ENCODE measurements at regions of chr9 and their contacts with region 1.

Region 1: DNA sequence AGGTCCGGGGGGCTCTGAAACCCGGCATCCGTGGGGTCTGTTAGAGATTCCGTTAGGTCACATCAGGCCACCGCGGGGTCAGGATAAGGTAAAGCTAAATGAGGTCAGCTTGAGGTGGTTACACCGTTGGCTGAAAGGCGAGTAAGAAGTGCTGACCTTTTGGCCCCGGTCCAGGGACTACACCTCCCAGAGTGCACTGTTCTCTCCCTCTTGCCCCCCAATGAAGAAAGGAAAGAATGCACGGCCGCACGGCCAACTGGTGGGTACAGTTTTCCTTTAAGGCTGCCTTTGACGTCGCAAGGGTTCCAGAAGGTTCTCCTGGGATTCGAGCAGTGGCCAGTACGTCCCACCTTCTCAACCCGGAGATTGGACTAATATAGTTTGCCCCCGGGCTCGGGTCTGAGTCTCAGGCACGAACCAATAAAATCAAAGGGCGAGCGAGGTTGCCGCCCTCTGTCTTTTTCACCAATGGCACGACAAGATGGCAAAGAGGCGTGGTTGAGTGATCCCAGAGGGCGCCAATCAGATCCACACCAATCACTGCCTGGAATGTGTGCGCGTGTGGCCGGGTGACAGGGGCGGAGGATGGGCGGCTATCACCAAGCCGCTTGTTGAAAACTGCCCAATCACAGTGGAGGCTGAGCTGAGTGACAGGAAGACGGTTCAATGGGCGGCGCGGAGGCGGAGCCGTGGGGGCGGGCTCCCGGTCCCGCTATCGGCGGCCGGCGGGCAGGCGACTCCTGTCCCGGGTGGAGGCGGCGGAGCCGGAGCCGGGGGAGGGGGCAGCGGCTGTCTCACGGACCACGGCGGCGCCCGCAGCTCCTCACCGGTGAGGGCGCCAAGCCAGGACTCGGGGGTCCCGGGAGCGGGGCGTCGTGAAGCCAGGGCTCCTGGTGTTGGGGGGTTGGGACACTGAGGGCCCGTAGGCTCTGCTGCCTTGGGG is at the start of gene DNAJB5:
- DNase-seq: peak; percentile 99
- ATAC-seq: peak; percentile 86 to 95
- H3K4me3 ChIP-seq: peak within 1 kb of the TSS; percentile 60
- H3K27ac ChIP-seq: peak within 1 kb of the TSS; percentile 56 to 83
- H3K4me1 ChIP-seq: peaks cover 37% of the 10 kb centered on the region
- CTCF ChIP-seq: no peak
- EP300 ChIP-seq: no peak
- POLR2A ChIP-seq: peak; percentile 53
- RAD21 ChIP-seq: no peak
- polyA plus RNA-seq, gene DNAJB5: 0.72 and 1.6 TPM in 2 replicates

Region 2: DNA sequence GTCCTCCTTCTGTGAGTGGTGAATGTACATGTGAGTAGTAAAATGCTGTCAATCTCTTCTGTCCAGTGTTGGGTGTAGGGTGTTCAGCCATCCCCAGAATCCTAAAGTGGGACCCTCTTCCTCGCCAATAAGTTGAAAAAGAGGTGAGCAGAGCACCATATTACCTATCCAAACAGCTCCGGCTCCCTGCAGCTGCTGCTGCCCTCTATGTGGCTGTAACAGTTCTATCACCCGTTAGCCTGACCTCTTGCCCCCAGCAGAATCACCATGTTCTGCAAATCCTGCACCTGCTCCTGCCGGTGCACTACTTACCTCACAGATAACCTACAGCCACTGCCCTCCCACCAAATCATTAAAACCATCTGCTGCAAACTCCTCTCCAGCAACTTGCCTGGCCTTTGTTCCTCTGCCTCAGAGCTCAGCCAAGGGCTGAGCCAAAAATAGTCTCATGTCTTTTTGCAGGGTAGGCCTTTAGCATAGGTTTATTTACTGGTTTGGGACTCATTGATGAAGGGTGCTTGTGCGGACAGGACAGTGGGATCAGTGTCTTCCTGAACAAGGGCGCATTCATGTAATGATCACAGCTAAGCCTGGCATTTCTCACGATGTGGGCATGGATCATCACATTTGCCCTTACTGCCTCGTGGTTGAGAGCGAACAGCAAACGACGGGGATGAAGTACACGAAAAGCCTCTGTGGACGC is 229.7 kb before region 1 on chr9:
- CTCF ChIA-PET with region 1: interaction called, 29 read pairs
- POLR2A ChIA-PET with region 1: no interaction called
- DNase-seq: no peak
- ATAC-seq: peak; percentile 47 to 55; a peak in 3 of 6 replicates
- H3K4me3 ChIP-seq: no peak overlapping the region
- H3K27ac ChIP-seq: no peak overlapping the region
- H3K4me1 ChIP-seq: no peaks in the 10 kb centered on the region
- CTCF ChIP-seq: no peak
- EP300 ChIP-seq: no peak
- POLR2A ChIP-seq: no peak
- RAD21 ChIP-seq: no peak

Region 3: DNA sequence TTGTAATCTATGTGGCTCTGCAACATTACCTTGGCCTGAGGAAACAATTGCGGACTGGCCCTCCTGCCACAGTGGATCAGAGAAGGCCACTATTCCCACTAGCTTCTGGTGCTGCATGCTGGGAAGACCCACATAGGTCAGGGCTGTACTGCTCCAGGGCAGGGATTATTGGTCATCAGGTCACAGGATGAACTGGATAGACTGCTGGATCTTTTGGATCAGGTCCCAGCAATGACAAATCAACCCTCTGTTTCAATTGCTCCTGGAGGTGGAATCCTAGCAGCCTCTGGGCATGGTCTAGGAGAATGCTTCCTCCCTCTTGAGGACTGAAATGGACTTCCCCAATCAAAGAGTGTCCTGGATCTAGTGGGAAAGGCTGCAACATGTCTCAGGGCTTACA is 97.9 kb before region 1 on chr9:
- CTCF ChIA-PET with region 1: interaction called, 132 read pairs
- POLR2A ChIA-PET with region 1: no interaction called
- DNase-seq: no peak
- ATAC-seq: no peak
- H3K4me3 ChIP-seq: no peak overlapping the region
- H3K27ac ChIP-seq: no peak overlapping the region
- H3K4me1 ChIP-seq: no peaks in the 10 kb centered on the region
- CTCF ChIP-seq: no peak
- EP300 ChIP-seq: no peak
- POLR2A ChIP-seq: no peak
- RAD21 ChIP-seq: no peak

Region 4: GRCh38 chr9:34957492-34958410 is 31.5 kb before region 1 on chr9 and contains the start of gene PHF24:
- CTCF ChIA-PET with region 1: interaction called, 26 read pairs
- POLR2A ChIA-PET with region 1: no interaction called
- DNase-seq: no peak
- ATAC-seq: peak; percentile 76 to 80
- H3K4me3 ChIP-seq: peak within 1 kb of the TSS; percentile 55
- H3K27ac ChIP-seq: peak within 1 kb of the TSS in 1 of 2 experiments; percentile 74; a peak in 4 of 6 replicates
- H3K4me1 ChIP-seq: peaks cover 4% of the 10 kb centered on the region; the same call in 1 of the 3 replicates
- CTCF ChIP-seq: no peak
- EP300 ChIP-seq: no peak
- POLR2A ChIP-seq: no peak
- RAD21 ChIP-seq: no peak
- polyA plus RNA-seq, gene PHF24: 0.01 TPM in 1 of 2 replicates, not detected in the other

Region 5: DNA sequence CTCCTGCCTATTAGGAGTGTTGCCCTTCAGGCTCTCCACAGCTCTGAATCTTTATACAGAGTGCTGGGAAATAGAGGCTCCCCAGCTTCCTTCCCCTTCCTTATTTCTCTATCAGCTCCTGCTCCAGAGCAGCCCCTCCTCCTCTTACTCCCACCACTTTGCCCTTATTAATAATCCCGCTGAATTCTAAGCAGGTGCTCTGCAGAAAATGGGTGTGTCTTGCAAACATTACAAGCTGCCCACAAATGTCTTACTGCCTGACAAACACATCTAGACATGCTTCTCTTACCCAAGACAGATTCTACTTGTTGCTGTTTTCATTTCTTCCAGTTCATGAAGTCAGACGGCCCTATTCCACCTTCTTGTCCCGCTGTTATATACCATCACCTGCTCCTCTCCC is 24.8 kb before region 1 on chr9:
- CTCF ChIA-PET with region 1: interaction called, 26 read pairs
- POLR2A ChIA-PET with region 1: no interaction called
- DNase-seq: no peak
- ATAC-seq: no peak
- H3K4me3 ChIP-seq: no peak overlapping the region
- H3K27ac ChIP-seq: no peak overlapping the region
- H3K4me1 ChIP-seq: no peaks in the 10 kb centered on the region
- CTCF ChIP-seq: no peak
- EP300 ChIP-seq: no peak
- POLR2A ChIP-seq: no peak
- RAD21 ChIP-seq: no peak

Region 6: DNA sequence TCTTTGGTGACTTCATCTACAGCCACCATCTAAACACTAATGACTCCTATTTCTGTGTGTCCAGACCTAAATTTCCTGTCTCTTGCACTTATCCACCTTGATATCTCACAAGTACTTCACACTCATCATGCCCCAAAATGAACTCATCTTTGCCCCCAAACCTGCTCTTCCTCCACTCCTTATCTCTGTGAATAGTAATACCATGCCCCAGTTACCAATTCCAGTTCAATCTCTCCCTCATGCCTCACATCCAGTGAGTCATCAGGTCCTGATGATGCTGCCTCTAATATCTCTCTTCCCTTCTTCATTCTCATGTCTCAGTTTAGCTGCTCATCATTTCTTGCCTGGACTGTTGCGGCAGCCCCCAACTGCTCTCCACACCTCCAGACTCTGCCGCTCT is 14.6 kb before region 1 on chr9:
- CTCF ChIA-PET with region 1: interaction called, 17 read pairs
- POLR2A ChIA-PET with region 1: no interaction called
- DNase-seq: no peak
- ATAC-seq: no peak
- H3K4me3 ChIP-seq: no peak overlapping the region
- H3K27ac ChIP-seq: no peak overlapping the region
- H3K4me1 ChIP-seq: no peaks in the 10 kb centered on the region
- CTCF ChIP-seq: no peak
- EP300 ChIP-seq: no peak
- POLR2A ChIP-seq: no peak
- RAD21 ChIP-seq: no peak

Region 7: GRCh38 chr9:35001803-35002502 is 12.7 kb after region 1 on chr9:
- CTCF ChIA-PET with region 1: interaction called, 16 read pairs
- POLR2A ChIA-PET with region 1: no interaction called
- DNase-seq: no peak
- ATAC-seq: peak in 1 of 2 experiments; percentile 37; a peak in 2 of 6 replicates
- H3K4me3 ChIP-seq: no peak overlapping the region
- H3K27ac ChIP-seq: no peak overlapping the region
- H3K4me1 ChIP-seq: peaks cover 5% of the 10 kb centered on the region; the same call in 1 of the 3 replicates
- CTCF ChIP-seq: no peak
- EP300 ChIP-seq: no peak
- POLR2A ChIP-seq: no peak
- RAD21 ChIP-seq: no peak

Measured in A549 (cell line).